Thyroid gland (tissue), 4 donors: ENCODE measurements at regions of chr9 and their contacts with region 1.

Region 1: DNA sequence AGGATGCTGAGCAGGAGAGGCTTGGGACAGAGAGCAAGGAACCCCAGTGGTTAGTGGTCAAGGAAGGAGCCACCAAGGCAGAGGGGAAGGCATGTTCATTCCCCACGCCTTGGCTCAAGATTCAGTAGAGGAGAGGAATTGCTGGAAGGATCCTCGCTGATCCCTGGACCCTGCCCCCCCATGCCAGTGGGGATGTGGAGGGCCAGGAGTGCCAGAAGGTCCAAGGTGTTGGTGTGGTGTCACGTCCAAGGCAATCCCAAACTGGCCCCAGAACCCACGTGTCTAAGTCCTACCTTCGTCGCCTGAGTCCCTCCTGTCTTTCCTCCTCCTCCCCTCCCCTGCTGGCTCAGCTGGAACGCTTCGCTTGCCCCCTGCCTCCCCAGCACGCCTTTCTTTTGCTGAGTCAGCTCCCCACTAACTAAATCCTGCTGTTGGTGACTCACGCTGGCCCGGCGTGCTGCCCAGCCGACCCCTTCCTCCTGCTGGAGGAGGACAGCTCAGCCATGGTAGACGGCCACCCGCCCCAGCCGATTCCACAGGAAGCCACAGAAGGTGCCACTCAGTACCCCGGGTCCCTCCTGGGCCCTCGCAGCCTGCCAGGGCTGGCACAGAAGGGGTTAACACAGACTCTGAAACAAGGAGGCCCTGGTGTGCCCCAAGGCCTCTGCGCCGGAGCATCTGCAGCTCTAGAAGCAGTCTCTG is 37.6 kb upstream of the ORM1 start:
- DNase-seq: peak in 1 of 2 donors; percentile 21
- H3K4me3 ChIP-seq: no peak overlapping the region
- H3K27ac ChIP-seq: no peak overlapping the region
- H3K4me1 ChIP-seq: no peaks in the 10 kb centered on the region
- H3K27me3 ChIP-seq: no peaks in the 10 kb centered on the region
- CTCF ChIP-seq: no peak
- POLR2A ChIP-seq: no peak

Region 2: GRCh38 chr9:113858282-113858681 is 427.0 kb before region 1 on chr9:
- intact Hi-C with region 1: no loop called
- DNase-seq: no peak
- H3K4me3 ChIP-seq: no peak overlapping the region
- H3K27ac ChIP-seq: no peak overlapping the region
- H3K4me1 ChIP-seq: peaks cover 0 to 12% of the 10 kb centered on the region in 2 donors
- H3K27me3 ChIP-seq: no peaks in the 10 kb centered on the region
- CTCF ChIP-seq: no peak
- POLR2A ChIP-seq: no peak

Region 3: DNA sequence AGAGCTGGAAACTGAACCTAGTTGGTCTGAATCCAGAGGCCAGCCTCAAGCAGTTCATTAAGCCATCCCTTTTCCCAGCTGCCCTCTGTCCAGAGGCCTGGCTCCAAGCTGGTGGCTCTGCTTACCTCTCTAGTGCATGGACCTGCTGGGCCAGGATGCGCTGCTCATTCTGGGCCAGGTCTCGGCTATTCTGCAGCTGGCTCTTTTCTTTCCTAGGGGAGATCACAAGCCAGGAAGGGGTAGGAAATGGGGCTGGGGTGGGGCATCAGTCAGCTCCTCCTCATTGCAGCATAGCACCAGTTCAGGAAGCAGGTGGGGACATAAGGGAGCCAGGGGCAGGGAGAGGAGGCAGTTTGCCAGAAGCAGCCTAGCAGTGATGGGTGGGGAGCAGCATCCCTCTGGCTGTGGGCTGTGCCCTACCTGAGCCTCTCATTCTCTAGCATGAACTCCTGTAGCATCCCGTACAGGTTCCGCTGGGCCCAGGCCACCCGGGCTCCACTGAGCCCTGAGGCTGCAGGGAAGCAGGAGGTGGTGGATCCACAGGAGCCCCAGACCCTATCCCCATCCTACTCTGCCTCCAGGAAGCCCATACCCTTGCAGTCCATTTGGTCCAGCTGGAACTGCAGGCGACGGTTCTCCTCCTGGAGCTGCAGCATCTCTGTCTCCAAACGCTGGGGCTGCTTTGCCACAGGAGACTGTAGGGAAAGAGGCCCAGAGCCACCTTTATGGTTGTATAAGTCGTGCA is 191.4 kb before region 1 on chr9:
- intact Hi-C with region 1: loop called (anchors 5 kb)
- DNase-seq: no peak
- H3K4me3 ChIP-seq: no peak overlapping the region
- H3K27ac ChIP-seq: no peak overlapping the region
- H3K4me1 ChIP-seq: peaks cover 7% of the 10 kb centered on the region in 2 donors
- H3K27me3 ChIP-seq: no peaks in the 10 kb centered on the region
- CTCF ChIP-seq: no peak
- POLR2A ChIP-seq: no peak

Region 4: DNA sequence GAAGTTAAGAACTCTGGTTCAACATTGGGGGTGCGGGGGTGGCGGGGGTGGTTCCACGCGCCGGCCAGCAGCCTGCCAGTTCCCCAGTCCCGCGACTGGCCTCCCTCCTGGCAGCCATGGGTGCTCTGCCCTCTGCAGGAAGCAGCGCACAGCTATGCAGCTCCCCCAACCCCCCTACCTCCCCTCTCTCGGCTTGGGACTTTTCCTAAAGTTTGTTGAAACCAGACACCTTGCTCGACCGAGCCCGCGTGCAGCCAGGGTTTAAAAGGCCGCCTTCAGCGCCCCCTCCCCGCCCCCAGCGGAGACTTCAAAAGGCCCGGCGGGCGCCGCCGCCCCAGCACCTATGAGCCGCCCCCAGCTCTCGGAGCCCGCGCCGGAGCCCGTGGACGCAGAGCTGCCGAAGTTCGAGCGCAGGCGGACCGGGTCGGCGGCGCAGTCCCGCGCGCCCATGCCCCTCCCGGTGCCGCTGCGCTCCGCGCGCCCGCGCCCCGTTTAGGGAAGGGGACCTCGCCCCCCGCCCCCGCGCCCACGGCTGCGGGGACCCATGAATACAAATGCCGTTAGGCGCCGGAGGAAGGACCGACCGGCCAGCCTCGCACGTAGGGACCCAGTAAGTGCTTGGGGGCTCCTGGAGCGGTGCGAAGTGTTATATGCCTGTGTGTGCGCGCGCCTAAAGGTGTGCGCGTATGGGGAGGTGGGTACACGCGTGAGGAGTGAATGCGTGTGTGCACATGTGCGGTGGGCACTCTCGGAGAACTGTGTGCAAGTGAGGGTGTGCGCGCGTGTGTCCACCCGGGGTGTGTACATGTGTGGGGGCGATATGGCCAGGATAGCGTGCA is 131.3 kb before region 1 on chr9:
- intact Hi-C with region 1: loop called (anchors 5 kb)
- DNase-seq: peak; percentile 47 to 50
- H3K4me3 ChIP-seq: peak overlapping the region in 1 of 3 donors; percentile 26
- H3K27ac ChIP-seq: no peak overlapping the region
- H3K4me1 ChIP-seq: peaks cover 0 to 28% of the 10 kb centered on the region in 2 donors
- H3K27me3 ChIP-seq: no peaks in the 10 kb centered on the region
- CTCF ChIP-seq: peak in 4 of 6 experiments; percentile 12 to 37 (median 26)
- POLR2A ChIP-seq: no peak